CD14-positive monocyte (primary cell): ENCODE measurements at regions of chr10 and their contacts with region 1.

Region 1: GRCh38 chr10:23643111-23643780 is 204.4 kb downstream of the OTUD1 start:
- DNase-seq: peak; percentile 95 to 99 (median 97)
- H3K4me3 ChIP-seq: peak overlapping the region in 1 of 3 experiments; percentile 22
- H3K4me3 Mint-ChIP-seq: peak overlapping the region; percentile 39 to 78
- H3K27ac ChIP-seq: peak overlapping the region; percentile 76 to 97
- H3K27ac Mint-ChIP-seq: peak overlapping the region; percentile 97 to 100 (median 99)
- H3K4me1 ChIP-seq: peaks cover 14 to 28% of the 10 kb centered on the region in 2 donors
- H3K4me1 Mint-ChIP-seq: peaks cover 18% of the 10 kb centered on the region
- H3K27me3 ChIP-seq: peaks cover 0 to 7% of the 10 kb centered on the region in 2 donors
- H3K27me3 Mint-ChIP-seq: peaks cover 3 to 6% (median 4%) of the 10 kb centered on the region in 3 donors
- CTCF ChIP-seq: no peak

Region 2: GRCh38 chr10:23413629-23414089 is 229.6 kb before region 1 on chr10:
- intact Hi-C with region 1: loop called in 1 of 2 experiments (anchors 2 kb)
- DNase-seq: peak; percentile 82 to 95 (median 91)
- H3K4me3 ChIP-seq: peak overlapping the region in 1 of 3 experiments; percentile 39
- H3K4me3 Mint-ChIP-seq: peak overlapping the region; percentile 75 to 78
- H3K27ac ChIP-seq: peak overlapping the region; percentile 77 to 87
- H3K27ac Mint-ChIP-seq: peak overlapping the region; percentile 89 to 99 (median 96)
- H3K4me1 ChIP-seq: peaks cover 32 to 33% of the 10 kb centered on the region in 2 donors
- H3K4me1 Mint-ChIP-seq: peaks cover 34% of the 10 kb centered on the region
- H3K27me3 ChIP-seq: no peaks in the 10 kb centered on the region
- H3K27me3 Mint-ChIP-seq: peaks cover 0 to 6% (median 1%) of the 10 kb centered on the region in 3 donors
- CTCF ChIP-seq: no peak

Region 3: DNA sequence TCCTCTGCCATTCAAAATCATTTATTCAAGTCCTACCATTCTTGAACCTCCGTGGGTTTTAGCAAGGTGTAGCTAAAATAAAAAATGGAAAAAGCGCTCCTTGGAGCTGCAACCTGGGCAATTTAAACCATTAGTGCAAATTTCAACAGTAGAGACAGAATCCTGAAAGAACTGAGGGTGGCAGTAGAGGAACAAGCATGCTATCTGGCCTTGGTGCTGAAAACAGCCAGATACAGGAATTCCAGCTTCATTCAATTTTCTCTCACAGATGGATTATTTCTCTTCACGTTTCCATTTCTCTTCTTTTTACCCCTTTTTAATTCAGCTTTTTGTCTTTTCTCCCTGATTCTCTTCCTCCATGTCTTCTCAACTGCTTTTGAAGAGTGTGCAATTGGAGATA is 126.7 kb before region 1 on chr10:
- intact Hi-C with region 1: loop called in 1 of 2 experiments (anchors 5 kb)
- DNase-seq: peak; percentile 19 to 46 (median 39)
- H3K4me3 ChIP-seq: no peak overlapping the region
- H3K4me3 Mint-ChIP-seq: no peak overlapping the region
- H3K27ac ChIP-seq: no peak overlapping the region
- H3K27ac Mint-ChIP-seq: no peak overlapping the region
- H3K4me1 ChIP-seq: peaks cover 16 to 24% of the 10 kb centered on the region in 2 donors
- H3K4me1 Mint-ChIP-seq: peaks cover 29% of the 10 kb centered on the region
- H3K27me3 ChIP-seq: no peaks in the 10 kb centered on the region
- H3K27me3 Mint-ChIP-seq: peaks cover 4 to 10% (median 6%) of the 10 kb centered on the region in 3 donors
- CTCF ChIP-seq: peak; percentile 65

Region 4: DNA sequence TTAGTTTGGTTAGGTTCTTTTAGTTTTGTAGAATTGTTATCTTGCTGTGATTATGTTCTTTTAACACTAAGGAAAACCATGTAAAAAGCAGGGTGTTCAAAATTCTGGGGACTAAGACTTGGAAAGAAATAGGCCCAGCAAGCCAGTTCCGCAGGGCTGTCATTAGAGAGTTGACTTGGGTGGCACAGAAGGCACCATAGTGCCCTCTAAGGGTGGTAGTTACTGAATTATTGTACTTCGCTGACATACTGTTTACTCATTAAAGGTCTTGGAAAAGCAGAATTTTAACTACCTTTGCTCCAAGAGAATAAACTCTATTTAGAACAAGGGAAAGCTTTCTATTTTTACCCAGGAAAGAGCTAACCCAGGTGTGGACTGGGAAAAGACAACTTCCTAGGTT is 117.8 kb before region 1 on chr10:
- intact Hi-C with region 1: loop called in 1 of 2 experiments (anchors 10 kb)
- DNase-seq: no peak
- H3K4me3 ChIP-seq: no peak overlapping the region
- H3K4me3 Mint-ChIP-seq: no peak overlapping the region
- H3K27ac ChIP-seq: no peak overlapping the region
- H3K27ac Mint-ChIP-seq: peak overlapping the region in 2 of 7 donors; percentile 19 to 60
- H3K4me1 ChIP-seq: peaks cover 11 to 14% of the 10 kb centered on the region in 2 donors
- H3K4me1 Mint-ChIP-seq: peaks cover 19% of the 10 kb centered on the region
- H3K27me3 ChIP-seq: no peaks in the 10 kb centered on the region
- H3K27me3 Mint-ChIP-seq: no peaks in the 10 kb centered on the region
- CTCF ChIP-seq: no peak

Region 5: DNA sequence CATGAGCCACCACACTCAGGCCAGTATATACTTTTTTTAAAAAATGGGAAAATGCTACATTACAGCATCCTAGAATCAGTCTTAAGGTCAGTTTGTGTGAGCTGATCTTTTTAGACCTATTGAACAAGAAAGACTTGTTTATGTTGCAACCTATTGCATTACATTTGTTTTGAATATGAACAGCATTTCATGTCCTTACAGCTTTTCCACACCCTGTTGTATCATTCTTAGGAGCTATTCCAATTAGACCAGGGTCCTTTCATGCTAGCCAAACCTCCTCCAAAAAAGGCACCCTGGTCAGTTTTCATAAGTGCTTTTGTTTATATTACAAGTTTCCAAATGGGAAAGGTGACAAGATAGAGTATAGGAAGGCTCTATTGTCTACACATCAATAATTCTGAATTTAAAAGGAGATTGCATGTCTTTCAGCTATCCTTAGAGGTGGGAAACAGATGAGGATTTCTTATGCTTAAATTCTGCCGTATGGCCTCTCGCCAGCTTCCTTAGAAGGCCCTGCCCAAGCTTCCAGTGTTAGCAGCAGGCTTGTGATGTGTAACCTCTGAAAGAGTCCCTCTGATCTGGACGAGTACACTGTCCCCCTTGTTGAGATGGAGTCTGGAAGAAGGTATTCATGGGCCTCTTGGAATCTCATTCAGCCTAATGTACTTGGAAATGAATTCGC is 32.5 kb before region 1 on chr10:
- intact Hi-C with region 1: no loop called
- DNase-seq: no peak
- H3K4me3 ChIP-seq: no peak overlapping the region
- H3K4me3 Mint-ChIP-seq: no peak overlapping the region
- H3K27ac ChIP-seq: no peak overlapping the region
- H3K27ac Mint-ChIP-seq: no peak overlapping the region
- H3K4me1 ChIP-seq: no peaks in the 10 kb centered on the region
- H3K4me1 Mint-ChIP-seq: peaks cover 7% of the 10 kb centered on the region
- H3K27me3 ChIP-seq: no peaks in the 10 kb centered on the region
- H3K27me3 Mint-ChIP-seq: peaks cover 0 to 7% (median 6%) of the 10 kb centered on the region in 3 donors
- CTCF ChIP-seq: no peak